Cardiac septum (tissue), 1 donor: ENCODE measurements at regions of chr10 and their contacts with region 1.

Region 1: DNA sequence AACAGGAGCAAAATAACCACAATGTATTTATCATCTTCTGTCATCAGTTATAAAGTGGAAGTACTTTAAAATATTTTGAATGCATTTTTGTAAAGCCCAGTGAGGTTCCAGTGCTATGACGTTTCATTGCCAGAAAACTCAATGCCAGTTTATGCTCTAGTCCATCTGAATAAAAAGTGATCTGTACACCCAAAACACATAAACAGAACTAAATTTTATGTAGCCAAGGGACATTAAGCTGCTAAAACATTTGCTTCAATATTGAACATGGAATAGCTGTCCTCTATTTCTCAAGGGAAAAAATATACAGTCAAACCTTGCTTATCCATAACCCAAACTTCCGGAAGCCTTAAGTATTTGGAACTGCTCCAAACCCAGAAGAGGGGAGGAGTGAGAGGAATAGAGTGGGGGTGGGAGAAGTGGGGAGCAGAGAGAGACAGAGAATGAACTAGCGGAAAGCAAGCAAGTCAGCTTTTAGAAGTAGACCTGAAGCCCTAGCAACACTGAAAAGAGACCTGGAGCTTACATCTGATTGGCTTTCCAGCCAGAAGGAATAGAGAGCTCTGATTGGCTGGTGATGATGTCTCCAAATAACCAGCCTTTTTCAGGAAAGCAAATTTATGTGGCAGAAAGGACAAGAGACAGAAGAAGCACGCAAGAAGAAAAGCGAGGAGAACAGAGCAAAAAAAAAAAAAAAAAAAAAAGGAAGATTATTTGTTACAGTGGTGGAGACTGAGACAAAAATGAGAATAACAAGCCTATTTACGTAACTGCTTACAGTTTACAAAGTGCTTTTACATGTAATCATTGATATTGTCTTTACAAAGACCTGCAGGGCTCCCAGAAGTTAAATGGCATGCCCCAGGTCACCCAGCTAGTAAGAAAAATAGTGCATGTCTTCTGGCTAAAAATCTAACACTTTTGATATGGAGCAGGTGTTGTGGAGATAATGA is 196.0 kb downstream of the RNLS start:
- DNase-seq: no peak

Region 2: GRCh38 chr10:88019753-88020152 is 367.3 kb before region 1 on chr10:
- intact Hi-C with region 1: no loop called
- DNase-seq: no peak

Region 3: DNA sequence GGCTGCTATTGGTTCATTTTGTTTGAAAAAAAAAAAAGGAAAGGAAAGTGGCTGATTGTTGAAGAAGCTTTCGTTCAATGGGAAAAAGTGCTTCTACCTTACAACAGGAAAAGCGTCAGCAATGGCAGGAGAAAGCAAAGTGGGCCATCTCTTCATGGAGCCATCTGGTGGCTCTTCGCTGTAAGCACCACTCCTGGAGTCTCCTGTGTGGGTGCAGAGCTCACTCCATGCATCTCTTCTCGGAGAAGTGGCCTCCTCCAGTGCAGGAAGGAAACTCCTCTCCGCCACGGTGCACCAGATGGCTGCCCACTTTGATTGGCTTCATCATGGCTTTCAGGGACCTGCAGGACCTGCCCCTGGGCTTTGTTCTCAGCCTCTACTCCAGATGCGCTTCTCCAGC is 272.7 kb before region 1 on chr10:
- intact Hi-C with region 1: loop called (anchors 10 kb)
- DNase-seq: no peak